ENCODE measurements at regions of chr4 and their contacts with region 1.

Region 1: DNA sequence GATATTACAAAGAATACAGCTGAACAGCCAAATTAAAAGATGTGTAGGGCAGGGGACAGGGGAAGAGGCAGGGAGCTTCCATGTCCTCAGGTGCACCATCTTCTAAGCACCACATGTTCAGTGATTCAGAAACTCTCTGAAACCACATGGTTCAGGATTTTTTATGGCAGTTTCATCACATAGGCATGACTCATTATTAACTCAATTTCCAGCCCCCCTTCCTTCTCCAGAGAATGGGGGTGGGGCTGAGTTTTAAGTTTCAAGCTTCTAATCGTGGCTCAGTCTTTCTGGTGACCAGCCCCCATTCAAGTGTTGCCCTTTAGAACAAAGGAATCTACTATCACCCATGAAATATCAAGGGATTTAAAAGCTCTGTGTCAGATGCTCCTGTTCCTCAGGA is 317.8 kb upstream of the GALNT7 start:
- DNase-seq: peak; percentile 84
- ATAC-seq: peak; percentile 90
- H3K4me3 ChIP-seq: no peak overlapping the region
- H3K27ac ChIP-seq: peak overlapping the region; percentile 80
- H3K4me1 ChIP-seq: peaks cover 24% of the 10 kb centered on the region
- H3K27me3 ChIP-seq: no peaks in the 10 kb centered on the region
- CTCF ChIP-seq: no peak

Region 2: DNA sequence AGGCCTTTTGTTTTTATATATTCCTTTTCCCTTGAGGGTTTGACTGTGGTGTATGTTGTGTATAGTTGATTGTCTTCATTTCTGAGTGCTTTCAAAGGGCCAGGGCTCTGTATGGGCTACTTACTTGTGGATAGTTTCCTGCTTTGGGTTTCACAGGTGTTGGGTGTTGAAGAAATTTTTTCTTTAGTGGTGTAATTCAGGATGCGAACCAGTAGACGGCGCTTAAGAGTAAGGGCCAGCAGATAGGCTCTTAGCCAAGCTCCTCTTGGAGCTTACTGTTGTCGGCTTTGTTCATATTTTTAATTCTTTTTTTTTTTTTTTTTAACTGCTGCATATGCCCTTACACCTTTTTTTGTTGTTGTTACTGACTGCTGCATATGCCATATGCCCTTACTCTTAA is 41.5 kb after region 1 on chr4:
- CTCF ChIA-PET with region 1: no interaction called
- POLR2A ChIA-PET with region 1: no interaction called
- intact Hi-C with region 1: no loop called
- DNase-seq: peak; percentile 52
- ATAC-seq: no peak
- H3K4me3 ChIP-seq: no peak overlapping the region
- H3K27ac ChIP-seq: no peak overlapping the region
- H3K4me1 ChIP-seq: no peaks in the 10 kb centered on the region
- H3K27me3 ChIP-seq: no peaks in the 10 kb centered on the region
- CTCF ChIP-seq: peak; percentile 70

Region 3: GRCh38 chr4:172962564-172963353 is 111.9 kb after region 1 on chr4:
- CTCF ChIA-PET with region 1: no interaction called
- POLR2A ChIA-PET with region 1: no interaction called
- intact Hi-C with region 1: no loop called
- DNase-seq: peak; percentile 93
- ATAC-seq: peak; percentile 98
- H3K4me3 ChIP-seq: no peak overlapping the region
- H3K27ac ChIP-seq: 0 out of 2 replicates have a peak overlapping the region, but pooled peaks have one; percentile 14
- H3K4me1 ChIP-seq: peaks cover 13% of the 10 kb centered on the region
- H3K27me3 ChIP-seq: peaks cover 19% of the 10 kb centered on the region
- CTCF ChIP-seq: no peak

Region 4: GRCh38 chr4:172998527-172999469 is 148.0 kb after region 1 on chr4:
- CTCF ChIA-PET with region 1: no interaction called
- POLR2A ChIA-PET with region 1: interaction called, 3 read pairs
- intact Hi-C with region 1: loop called (anchors 10 kb)
- DNase-seq: peak; percentile 51
- ATAC-seq: peak; percentile 13; the same call in 1 of the 2 replicates
- H3K4me3 ChIP-seq: no peak overlapping the region
- H3K27ac ChIP-seq: peak overlapping the region; percentile 53
- H3K4me1 ChIP-seq: peaks cover 42% of the 10 kb centered on the region
- H3K27me3 ChIP-seq: no peaks in the 10 kb centered on the region
- CTCF ChIP-seq: no peak